Heart right ventricle (tissue), 16 donors: ENCODE measurements at regions of chr1 and their contacts with region 1.

Region 1: GRCh38 chr1:205179842-205180241 is 31.7 kb downstream of the DSTYK start:
- DNase-seq: no peak
- ATAC-seq: no peak
- H3K4me3 ChIP-seq: no peak overlapping the region
- H3K27ac ChIP-seq: no peak overlapping the region
- H3K4me1 ChIP-seq: peaks cover 0 to 51% (median 28%) of the 10 kb centered on the region in 9 donors
- H3K27me3 ChIP-seq: no peaks in the 10 kb centered on the region
- CTCF ChIP-seq: no peak

Region 2: GRCh38 chr1:203186446-203187303 is 1993.2 kb before region 1 on chr1 and contains the start of gene CHI3L1:
- intact Hi-C with region 1: no loop called
- DNase-seq: no peak
- ATAC-seq: peak in 2 of 8 donors; percentile 11 to 15
- H3K4me3 ChIP-seq: no peak within 1 kb of the TSS
- H3K27ac ChIP-seq: peak within 1 kb of the TSS in 1 of 10 donors; percentile 16
- H3K4me1 ChIP-seq: peaks cover 0 to 19% (median 4%) of the 10 kb centered on the region in 9 donors
- H3K27me3 ChIP-seq: peaks cover 0 to 4% (median 0%) of the 10 kb centered on the region in 7 donors
- CTCF ChIP-seq: no peak
- total RNA-seq, gene CHI3L1: 0.15 to 11.0 (median 0.42) TPM in 9 of 10 donors, not detected in the other

Region 3: DNA sequence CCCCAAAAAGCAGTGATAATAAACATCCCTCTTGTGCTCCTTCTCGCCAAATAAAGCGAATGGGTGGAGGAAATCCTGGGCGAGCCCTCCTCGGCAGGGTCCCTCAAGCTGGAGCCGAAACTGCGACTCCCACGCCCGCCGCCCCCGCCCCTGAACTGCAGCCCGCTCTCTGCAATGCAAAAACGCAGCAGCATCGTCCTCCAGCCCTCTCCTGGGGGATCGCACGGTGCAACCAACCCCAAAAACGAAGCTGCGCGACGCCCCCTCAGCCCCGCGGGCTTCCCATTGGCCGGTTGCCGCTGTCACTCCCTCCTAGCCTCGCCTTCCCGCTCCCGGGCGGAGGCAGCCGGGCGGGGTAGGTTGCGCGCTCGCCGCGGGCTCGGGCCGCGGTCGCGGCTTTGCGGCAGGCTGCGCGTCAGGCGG is 47.8 kb after region 1 on chr1 and contains the start of gene TMCC2:
- intact Hi-C with region 1: loop called in 1 of 10 experiments (anchors 5 kb)
- DNase-seq: peak; percentile 93 to 94
- ATAC-seq: peak; percentile 95 to 98 (median 97)
- H3K4me3 ChIP-seq: peak within 1 kb of the TSS; percentile 35 to 85 (median 62)
- H3K27ac ChIP-seq: peak within 1 kb of the TSS in 2 of 10 donors; percentile 10 to 19
- H3K4me1 ChIP-seq: peaks cover 0 to 30% (median 23%) of the 10 kb centered on the region in 9 donors
- H3K27me3 ChIP-seq: peaks cover 0 to 36% (median 0%) of the 10 kb centered on the region in 7 donors
- CTCF ChIP-seq: no peak
- total RNA-seq, gene TMCC2: 0.62 to 2.6 (median 1.8) TPM